Kidney (tissue), 22 donors: ENCODE measurements at regions of chr16 and their contacts with region 1.

Region 1: DNA sequence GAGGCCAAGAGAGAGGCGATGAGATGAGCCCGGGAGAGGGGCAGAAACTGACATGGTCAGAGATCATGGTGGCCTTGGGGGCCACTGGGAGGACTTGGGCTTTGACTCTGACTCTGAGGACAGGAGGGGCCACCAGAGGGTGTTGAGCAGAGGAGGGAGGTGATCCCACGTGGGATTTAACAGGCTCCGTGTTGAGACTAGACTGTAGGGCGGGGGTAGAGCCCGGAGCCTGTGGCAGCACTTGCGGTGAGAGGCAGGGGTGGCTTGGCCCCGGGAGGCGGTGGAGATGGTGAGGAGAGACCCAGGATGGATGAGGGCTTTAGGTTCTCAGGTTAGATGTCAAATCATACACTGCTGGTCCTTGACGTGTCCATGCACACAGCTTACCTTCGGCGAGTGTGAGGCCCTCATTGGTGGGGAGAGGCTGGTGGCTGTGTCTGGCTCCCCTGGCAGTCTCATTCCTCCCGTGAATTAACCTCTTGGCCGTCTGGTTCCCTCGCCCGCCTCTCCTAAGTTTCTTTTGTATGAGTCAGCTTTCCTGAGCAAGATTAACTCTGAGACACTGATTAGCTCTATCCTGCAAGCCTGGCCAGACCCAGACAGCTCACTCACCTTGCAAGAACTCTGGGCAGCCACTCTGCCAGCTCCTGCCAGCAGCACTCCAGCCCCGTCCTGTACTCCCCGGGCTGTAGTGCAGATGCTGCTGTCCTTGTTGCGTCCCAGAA is 39.7 kb downstream of the VPS35L start:
- DNase-seq: no peak
- H3K4me3 ChIP-seq: no peak overlapping the region
- H3K27ac ChIP-seq: no peak overlapping the region
- H3K4me1 ChIP-seq: no peaks in the 10 kb centered on the region
- H3K27me3 ChIP-seq: no peaks in the 10 kb centered on the region
- CTCF ChIP-seq: no peak

Region 2: GRCh38 chr16:19704321-19705145 is 109.3 kb after region 1 on chr16:
- intact Hi-C with region 1: no loop called
- DNase-seq: peak in 1 of 5 donors; percentile 62
- H3K4me3 ChIP-seq: no peak overlapping the region
- H3K27ac ChIP-seq: peak overlapping the region; percentile 75 to 79
- H3K4me1 ChIP-seq: no peaks in the 10 kb centered on the region
- H3K27me3 ChIP-seq: no peaks in the 10 kb centered on the region
- CTCF ChIP-seq: no peak

Region 3: DNA sequence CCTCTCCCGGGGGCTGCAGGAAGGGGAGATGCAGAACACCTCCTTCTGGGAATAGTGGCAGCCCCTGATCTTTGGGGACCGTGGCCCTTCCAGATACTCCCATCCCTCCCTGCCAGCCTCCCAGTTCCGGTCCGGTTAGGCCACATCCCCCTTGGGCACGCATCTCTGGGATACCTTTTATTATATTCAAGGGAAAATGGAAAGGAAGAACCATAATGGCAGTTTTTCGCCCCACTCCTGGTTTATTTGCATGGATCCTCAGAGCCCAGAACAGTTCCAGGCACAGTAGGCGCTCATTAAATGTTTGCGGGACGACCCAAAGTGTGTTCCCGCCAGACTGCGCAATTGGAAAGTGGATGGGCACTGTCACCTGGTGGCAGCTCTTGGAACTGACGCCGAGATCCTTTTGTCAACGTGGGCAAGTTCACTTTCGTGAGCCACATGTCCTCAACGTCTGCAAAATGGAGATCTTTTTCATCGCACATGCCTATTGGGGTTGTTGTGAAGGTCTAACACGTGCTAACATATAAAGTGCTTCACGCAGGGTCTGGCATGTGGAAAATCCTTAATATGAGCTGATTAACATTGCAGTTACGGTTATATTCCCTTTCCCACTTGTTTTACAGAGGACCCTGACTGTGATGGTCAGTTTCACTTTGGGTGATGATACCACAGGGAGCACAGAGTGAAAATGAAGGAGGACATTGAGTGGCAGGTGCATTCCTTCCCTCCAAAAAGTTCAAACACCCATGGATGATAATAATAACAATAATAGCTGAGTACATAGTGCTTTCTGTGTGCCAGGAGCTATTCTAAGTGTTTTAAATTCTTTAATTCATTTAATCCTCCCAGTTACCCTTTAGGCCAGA is 291.1 kb after region 1 on chr16:
- intact Hi-C with region 1: loop called (anchors 5 kb)
- DNase-seq: peak; percentile 83 to 90 (median 88)
- H3K4me3 ChIP-seq: peak overlapping the region in 2 of 3 donors; percentile 31 to 72
- H3K27ac ChIP-seq: no peak overlapping the region
- H3K4me1 ChIP-seq: peaks cover 0 to 14% (median 5%) of the 10 kb centered on the region in 3 donors
- H3K27me3 ChIP-seq: no peaks in the 10 kb centered on the region
- CTCF ChIP-seq: peak; percentile 100